Activated T-helper 1 cell treated with anti-CD3 and anti-CD28 coated beads, Interleukin-12 subunit alpha, Interleukin-12 subunit beta, Interleukin-2, Interleukin-4 antibody, amounts not matched to agents 30 ng/mL and 10 ng/mL and 1 ng/mL, durations not matched to agents 14 hours and 24 hours and 36 hours (primary cell): ENCODE measurements at regions of chr14 and their contacts with region 1.

Region 1: GRCh38 chr14:68788996-68789820 is 3.7 kb downstream of the ZFP36L1 start:
- DNase-seq: peak; percentile 82
- H3K4me3 Mint-ChIP-seq: peak overlapping the region; percentile 98
- H3K27ac Mint-ChIP-seq: peak overlapping the region; percentile 100
- H3K4me1 Mint-ChIP-seq: peaks cover 65% of the 10 kb centered on the region
- H3K27me3 Mint-ChIP-seq: no peaks in the 10 kb centered on the region

Region 2: GRCh38 chr14:68379510-68380328 is 409.5 kb before region 1 on chr14:
- intact Hi-C with region 1: loop called (anchors 2 kb)
- DNase-seq: no peak
- H3K4me3 Mint-ChIP-seq: no peak overlapping the region
- H3K27ac Mint-ChIP-seq: no peak overlapping the region
- H3K4me1 Mint-ChIP-seq: peaks cover 29% of the 10 kb centered on the region
- H3K27me3 Mint-ChIP-seq: no peaks in the 10 kb centered on the region

Region 3: GRCh38 chr14:68482772-68483395 is 306.3 kb before region 1 on chr14:
- intact Hi-C with region 1: loop called (anchors 2 kb)
- DNase-seq: no peak
- H3K4me3 Mint-ChIP-seq: no peak overlapping the region
- H3K27ac Mint-ChIP-seq: peak overlapping the region; percentile 71
- H3K4me1 Mint-ChIP-seq: peaks cover 34% of the 10 kb centered on the region
- H3K27me3 Mint-ChIP-seq: peaks cover 2% of the 10 kb centered on the region

Region 4: GRCh38 chr14:68621400-68622365 is 167.5 kb before region 1 on chr14:
- intact Hi-C with region 1: no loop called
- DNase-seq: no peak
- H3K4me3 Mint-ChIP-seq: no peak overlapping the region
- H3K27ac Mint-ChIP-seq: no peak overlapping the region
- H3K4me1 Mint-ChIP-seq: no peaks in the 10 kb centered on the region
- H3K27me3 Mint-ChIP-seq: no peaks in the 10 kb centered on the region

Region 5: DNA sequence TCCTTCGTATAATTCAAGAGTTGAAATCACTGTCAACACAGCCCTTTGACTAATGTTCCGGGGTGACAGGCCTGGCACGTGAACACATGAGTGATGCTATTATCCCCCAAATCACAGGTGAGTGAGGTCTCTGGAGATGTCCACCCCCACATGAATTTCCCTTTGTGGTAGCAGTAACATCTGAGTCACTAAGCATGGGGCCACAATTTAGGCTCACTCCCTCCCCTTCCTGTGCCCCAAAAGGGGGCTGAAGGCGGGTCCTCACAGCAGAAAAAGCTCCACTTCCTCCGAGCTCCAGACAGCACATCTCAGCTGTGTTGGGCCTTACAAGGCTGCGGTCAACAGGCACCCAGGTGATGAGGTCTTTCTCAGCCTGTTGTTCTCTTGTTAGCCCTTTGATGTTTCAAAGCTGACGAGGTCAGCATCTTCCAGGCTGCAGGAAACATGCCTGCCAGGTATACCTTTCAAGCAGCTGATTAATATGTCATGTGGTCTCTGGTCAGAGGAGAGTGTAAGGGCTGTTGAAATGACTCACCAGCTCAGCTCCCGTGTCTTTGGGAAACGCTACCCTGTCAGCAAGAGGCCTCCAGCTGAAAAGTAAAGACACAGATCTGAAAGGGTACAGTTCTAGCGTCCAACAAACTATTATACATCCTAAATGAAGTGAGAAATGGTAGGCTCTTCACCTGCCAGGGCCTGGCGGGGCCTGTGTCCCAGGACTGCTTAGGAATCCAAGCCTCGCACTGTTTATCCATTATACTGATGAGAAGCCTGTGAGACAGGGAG is 103.6 kb before region 1 on chr14:
- intact Hi-C with region 1: loop called (anchors 1 kb)
- DNase-seq: peak; percentile 71
- H3K4me3 Mint-ChIP-seq: peak overlapping the region; percentile 45
- H3K27ac Mint-ChIP-seq: peak overlapping the region; percentile 86
- H3K4me1 Mint-ChIP-seq: peaks cover 61% of the 10 kb centered on the region
- H3K27me3 Mint-ChIP-seq: peaks cover 2% of the 10 kb centered on the region

Region 6: DNA sequence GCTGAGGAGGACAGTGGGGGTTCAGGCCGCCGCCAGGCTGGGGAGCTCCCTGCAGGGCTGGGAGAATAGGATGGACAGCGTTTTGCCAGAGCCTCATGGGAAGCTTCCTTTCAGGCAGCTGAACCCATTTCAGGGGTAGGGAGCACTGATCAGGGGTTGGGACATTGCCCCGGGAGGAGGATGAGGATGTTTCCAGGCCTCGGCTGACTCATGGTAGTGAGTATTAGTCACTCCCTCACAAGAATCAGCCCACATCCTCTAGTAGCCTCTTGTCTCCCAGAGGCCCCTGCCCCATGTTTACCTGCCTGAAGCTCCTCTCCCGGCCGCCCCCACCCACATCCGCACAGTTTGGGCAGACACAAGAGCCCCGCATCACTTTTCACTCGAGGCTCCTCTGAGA is 86.1 kb before region 1 on chr14:
- intact Hi-C with region 1: no loop called
- DNase-seq: no peak
- H3K4me3 Mint-ChIP-seq: no peak overlapping the region
- H3K27ac Mint-ChIP-seq: no peak overlapping the region
- H3K4me1 Mint-ChIP-seq: peaks cover 12% of the 10 kb centered on the region
- H3K27me3 Mint-ChIP-seq: peaks cover 4% of the 10 kb centered on the region

Region 7: DNA sequence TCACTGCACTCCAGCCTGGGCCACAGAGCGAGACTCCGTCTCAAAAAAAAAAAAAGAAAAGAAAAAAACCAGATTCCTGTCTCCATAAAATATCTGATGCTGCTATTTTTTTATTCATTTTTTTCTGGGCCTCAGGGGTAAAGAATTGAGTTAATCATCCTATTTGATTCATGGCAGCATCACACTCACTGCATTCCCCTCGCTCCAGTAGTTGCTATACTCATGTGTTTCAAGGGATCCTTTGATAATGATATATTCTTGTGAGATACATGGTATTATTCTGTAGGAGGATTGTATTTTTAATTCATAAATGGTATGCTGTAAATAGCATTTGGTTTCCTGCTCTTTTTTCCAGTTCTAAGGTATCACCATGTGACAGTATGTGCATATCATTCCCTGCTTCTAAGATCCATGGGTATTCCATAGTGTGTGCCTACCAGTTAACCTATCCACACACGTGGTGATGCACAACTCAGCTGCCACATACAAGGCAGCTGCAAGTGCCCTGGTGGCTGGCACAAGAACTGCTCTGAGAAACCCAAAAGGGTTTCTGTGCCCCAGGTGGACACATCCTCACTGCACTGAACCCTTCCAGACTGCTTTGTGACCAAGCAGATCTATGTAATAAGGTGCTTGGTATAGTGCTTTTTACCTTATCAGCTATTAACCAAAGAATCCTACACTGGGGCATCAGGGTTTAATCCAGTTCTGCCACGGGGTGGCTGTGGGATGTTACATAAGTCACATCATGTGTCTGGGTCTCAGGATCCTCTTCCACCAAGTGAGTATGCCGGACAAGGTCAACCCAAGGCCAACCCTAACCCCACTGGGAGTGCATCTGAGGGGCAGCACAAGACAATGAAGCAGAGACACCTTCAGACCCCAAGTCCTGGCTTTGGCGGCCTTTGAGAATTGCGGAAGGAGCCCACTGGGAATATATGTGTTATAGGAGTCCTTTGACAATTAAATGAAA is 70.9 kb before region 1 on chr14:
- intact Hi-C with region 1: loop called (anchors 2 kb)
- DNase-seq: no peak
- H3K4me3 Mint-ChIP-seq: no peak overlapping the region
- H3K27ac Mint-ChIP-seq: no peak overlapping the region
- H3K4me1 Mint-ChIP-seq: peaks cover 56% of the 10 kb centered on the region
- H3K27me3 Mint-ChIP-seq: peaks cover 2% of the 10 kb centered on the region

Region 8: GRCh38 chr14:68734231-68734775 is 54.9 kb before region 1 on chr14:
- intact Hi-C with region 1: loop called (anchors 1 kb)
- DNase-seq: no peak
- H3K4me3 Mint-ChIP-seq: peak overlapping the region; percentile 16
- H3K27ac Mint-ChIP-seq: peak overlapping the region; percentile 77
- H3K4me1 Mint-ChIP-seq: peaks cover 67% of the 10 kb centered on the region
- H3K27me3 Mint-ChIP-seq: no peaks in the 10 kb centered on the region

Region 9: DNA sequence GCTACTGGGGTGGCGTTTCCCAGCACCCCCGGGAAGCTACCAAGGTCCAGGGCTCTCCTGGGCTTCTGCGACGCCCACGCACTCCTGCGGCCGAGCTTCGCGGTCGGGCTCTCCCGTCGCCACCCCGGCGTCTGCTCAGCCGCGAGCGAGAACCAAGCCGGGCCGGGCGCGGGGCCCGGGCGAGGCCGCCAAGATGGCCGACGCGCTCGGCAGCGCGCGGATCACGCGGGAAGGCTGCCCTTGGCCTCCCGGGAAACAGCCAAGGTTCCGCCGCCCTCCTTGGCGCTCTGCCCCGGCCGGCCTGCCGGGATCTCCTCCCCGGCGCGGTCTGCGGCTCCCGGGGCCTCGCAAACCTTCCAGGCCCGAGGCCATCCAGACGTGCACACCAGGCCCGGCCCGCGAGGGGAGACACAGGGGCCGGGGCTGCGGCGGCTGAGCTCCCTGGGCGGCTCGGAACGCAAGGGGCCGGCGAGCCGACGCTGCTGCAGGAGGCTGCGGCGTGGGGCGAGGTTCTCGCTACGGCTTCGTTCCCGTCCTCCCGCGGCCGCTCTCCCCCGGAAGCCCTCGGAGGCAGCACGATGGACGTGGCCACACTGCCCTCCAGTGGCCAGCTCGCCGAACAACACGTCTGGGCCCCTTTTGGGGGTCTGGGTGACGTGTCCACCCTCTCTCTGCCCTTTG is 27.2 kb after region 1 on chr14:
- intact Hi-C with region 1: loop called (anchors 1 kb)
- DNase-seq: peak; percentile 84
- H3K4me3 Mint-ChIP-seq: peak overlapping the region; percentile 76
- H3K27ac Mint-ChIP-seq: peak overlapping the region; percentile 90
- H3K4me1 Mint-ChIP-seq: peaks cover 58% of the 10 kb centered on the region
- H3K27me3 Mint-ChIP-seq: no peaks in the 10 kb centered on the region